MCF 10A (cell line): ENCODE measurements at regions of chr18 and their contacts with region 1.

Region 1: GRCh38 chr18:50819728-50820378 is at the start of gene MRO:
- DNase-seq: peak; percentile 80
- H3K4me3 Mint-ChIP-seq: no peak within 1 kb of the TSS
- H3K27ac Mint-ChIP-seq: no peak within 1 kb of the TSS
- H3K4me1 Mint-ChIP-seq: peaks cover 10% of the 10 kb centered on the region
- H3K27me3 Mint-ChIP-seq: no peaks in the 10 kb centered on the region
- CTCF ChIP-seq: peak; percentile 97
- total RNA-seq, gene MRO: not detected in 2 replicates

Region 2: DNA sequence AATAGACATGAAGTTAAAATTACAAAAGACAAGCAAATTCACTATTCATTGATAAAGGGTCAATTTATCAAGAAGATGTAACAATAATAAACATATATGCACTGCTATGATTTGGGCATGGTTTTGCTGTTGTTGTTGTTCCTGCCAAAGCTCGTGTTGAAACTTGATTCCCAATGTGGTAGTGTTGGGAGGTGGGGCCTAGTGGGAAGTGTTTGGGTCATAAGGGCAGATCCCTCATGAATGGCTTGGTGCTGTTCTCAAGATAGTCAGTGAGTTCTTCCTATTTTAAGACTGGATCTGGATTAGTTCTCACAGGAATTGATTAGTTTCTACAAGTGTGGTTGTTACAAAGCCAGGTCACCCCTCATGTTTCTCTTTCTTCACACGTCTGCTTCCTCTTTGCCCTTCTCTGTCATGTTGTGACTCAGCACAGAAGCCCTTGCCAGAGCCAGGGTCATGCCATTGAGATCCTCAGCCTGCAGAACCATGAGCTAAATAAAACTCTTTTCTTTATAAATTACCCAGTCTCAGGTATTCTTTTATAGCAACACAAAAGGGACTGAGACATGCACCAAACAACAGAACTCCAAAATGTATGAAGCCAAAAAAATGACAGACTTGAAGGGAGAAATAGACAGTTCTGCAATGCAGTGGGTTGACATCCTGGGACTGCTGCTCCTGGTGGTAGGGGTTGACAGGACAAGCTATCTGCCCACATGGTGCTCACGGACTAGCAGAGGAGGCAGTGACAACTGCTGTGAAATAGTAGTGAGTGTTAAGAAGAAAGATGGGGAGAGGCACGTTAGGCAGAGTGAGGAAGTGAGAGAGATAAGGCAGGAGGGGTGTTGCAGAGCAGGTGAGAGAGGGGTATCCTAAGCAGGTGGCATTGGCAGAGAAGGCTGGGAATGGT is 463.6 kb before region 1 on chr18:
- CTCF ChIA-PET with region 1: no interaction called
- POLR2A ChIA-PET with region 1: no interaction called
- intact Hi-C with region 1: no loop called
- DNase-seq: peak; percentile 71
- H3K4me3 Mint-ChIP-seq: no peak overlapping the region
- H3K27ac Mint-ChIP-seq: peak overlapping the region; percentile 78
- H3K4me1 Mint-ChIP-seq: peaks cover 15% of the 10 kb centered on the region
- H3K27me3 Mint-ChIP-seq: peaks cover 28% of the 10 kb centered on the region
- CTCF ChIP-seq: no peak

Region 3: DNA sequence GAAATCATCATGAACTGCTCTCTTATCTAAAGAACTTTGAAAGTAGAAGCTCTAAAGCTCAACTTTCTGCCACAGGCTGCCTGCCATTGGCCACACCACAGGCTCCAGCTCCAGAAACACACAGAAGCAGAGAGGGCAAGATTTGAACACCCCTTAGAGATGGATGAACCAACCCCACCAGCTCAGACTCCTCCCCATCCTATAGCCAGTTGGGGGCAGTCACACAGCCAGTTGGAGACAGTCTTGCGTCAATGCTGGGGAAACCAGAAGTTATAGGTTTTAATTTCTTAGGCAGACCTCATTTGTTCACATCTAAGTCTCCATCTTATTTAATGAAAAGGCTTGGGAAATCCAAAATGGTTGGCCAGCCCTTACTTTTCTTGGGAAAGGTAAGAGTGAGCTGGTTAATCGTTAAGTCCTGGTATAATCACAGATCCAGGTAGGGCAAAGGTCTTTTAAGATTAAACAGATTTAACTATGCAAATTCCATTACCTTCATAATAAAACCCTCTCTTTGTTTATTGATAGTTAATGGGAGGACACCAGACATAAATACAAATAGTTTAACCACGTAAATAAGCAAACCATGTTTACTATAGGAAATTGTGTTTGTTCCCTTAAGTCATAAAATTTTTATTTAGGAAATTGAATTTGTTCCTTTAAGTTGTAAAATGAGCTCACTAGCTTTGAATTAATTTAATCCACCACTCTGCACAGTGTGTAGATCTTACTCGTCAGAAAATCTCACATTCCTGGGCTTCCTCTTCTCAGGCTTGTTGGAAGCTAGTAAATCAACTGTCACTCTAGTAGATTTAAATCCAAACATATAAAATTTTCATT is 28.0 kb before region 1 on chr18:
- CTCF ChIA-PET with region 1: no interaction called
- POLR2A ChIA-PET with region 1: no interaction called
- intact Hi-C with region 1: no loop called
- DNase-seq: no peak
- H3K4me3 Mint-ChIP-seq: no peak overlapping the region
- H3K27ac Mint-ChIP-seq: no peak overlapping the region
- H3K4me1 Mint-ChIP-seq: no peaks in the 10 kb centered on the region
- H3K27me3 Mint-ChIP-seq: peaks cover 32% of the 10 kb centered on the region
- CTCF ChIP-seq: no peak

Region 4: DNA sequence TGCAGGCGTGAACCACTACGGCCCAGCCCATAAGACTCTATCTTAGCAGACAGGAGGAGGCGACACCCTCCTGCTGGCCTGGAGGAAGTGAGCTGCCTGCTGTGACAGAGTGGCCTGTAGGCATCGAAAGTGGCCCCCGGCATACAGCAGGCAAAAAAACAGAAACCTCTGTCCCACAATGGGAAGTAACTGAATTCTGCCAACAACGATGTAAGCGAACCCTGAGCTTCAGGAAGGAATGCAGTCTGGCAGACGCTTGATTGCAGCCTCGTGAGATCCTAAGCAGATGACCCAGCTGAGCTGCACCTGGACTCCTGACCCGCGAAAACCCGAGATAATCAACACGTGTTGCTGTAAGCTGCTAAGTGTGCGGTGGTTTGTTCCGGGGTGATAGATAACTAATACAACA is 13.6 kb before region 1 on chr18:
- CTCF ChIA-PET with region 1: interaction called, 10 read pairs
- POLR2A ChIA-PET with region 1: interaction called, 3 read pairs
- intact Hi-C with region 1: no loop called
- DNase-seq: no peak
- H3K4me3 Mint-ChIP-seq: no peak overlapping the region
- H3K27ac Mint-ChIP-seq: no peak overlapping the region
- H3K4me1 Mint-ChIP-seq: no peaks in the 10 kb centered on the region
- H3K27me3 Mint-ChIP-seq: peaks cover 13% of the 10 kb centered on the region
- CTCF ChIP-seq: no peak

Region 5: DNA sequence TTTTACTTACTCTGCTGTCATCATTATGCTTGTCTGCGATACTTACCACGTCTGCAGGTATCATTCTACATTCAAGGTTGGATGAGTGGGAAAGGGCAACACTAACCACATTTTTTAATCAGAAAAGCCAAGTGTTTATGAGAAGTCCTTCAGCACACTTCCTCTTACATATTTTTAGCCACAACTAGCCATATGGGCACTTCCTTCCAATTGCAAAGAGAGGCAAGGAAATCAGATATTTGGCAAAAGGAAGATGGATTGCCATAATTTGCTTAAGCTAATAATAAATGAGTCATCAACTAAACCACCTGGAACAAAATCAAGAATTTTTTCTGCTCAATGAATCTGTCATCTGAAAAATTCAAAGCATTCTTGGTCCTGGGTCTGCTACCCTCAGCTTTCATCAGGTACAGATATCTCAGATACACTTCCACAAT is 16.7 kb after region 1 on chr18:
- CTCF ChIA-PET with region 1: interaction called, 28 read pairs
- POLR2A ChIA-PET with region 1: no interaction called
- intact Hi-C with region 1: no loop called
- DNase-seq: peak; percentile 78
- H3K4me3 Mint-ChIP-seq: no peak overlapping the region
- H3K27ac Mint-ChIP-seq: no peak overlapping the region
- H3K4me1 Mint-ChIP-seq: peaks cover 17% of the 10 kb centered on the region
- H3K27me3 Mint-ChIP-seq: no peaks in the 10 kb centered on the region
- CTCF ChIP-seq: no peak

Region 6: GRCh38 chr18:50866765-50867164 is 46.9 kb after region 1 on chr18:
- CTCF ChIA-PET with region 1: interaction called, 6 read pairs
- POLR2A ChIA-PET with region 1: interaction called, 7 read pairs
- intact Hi-C with region 1: loop called (anchors 1 kb)
- DNase-seq: peak; percentile 22
- H3K4me3 Mint-ChIP-seq: no peak overlapping the region
- H3K27ac Mint-ChIP-seq: no peak overlapping the region
- H3K4me1 Mint-ChIP-seq: peaks cover 12% of the 10 kb centered on the region
- H3K27me3 Mint-ChIP-seq: no peaks in the 10 kb centered on the region
- CTCF ChIP-seq: peak; percentile 7

Region 7: DNA sequence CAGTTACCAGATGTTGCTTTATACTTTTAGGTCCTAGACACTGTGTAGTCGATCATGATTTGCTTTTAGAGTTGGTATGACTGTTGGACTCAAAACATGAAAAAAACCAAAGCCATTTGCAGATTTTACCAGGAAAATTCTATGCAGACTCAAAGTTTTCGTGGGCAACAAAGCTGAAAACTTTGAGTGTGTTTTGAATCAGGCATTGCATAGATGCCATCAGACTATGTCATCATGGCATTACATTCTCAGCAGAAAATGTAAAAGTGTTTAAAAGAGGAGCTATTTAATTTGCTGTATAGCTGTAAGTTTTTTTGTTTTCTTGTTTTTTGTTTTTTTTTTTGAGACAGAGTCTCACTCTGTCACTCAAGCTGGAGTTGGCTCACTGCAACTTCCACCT is 104.5 kb after region 1 on chr18:
- CTCF ChIA-PET with region 1: no interaction called
- POLR2A ChIA-PET with region 1: no interaction called
- intact Hi-C with region 1: no loop called
- DNase-seq: no peak
- H3K4me3 Mint-ChIP-seq: no peak overlapping the region
- H3K27ac Mint-ChIP-seq: no peak overlapping the region
- H3K4me1 Mint-ChIP-seq: no peaks in the 10 kb centered on the region
- H3K27me3 Mint-ChIP-seq: no peaks in the 10 kb centered on the region
- CTCF ChIP-seq: no peak

Region 8: DNA sequence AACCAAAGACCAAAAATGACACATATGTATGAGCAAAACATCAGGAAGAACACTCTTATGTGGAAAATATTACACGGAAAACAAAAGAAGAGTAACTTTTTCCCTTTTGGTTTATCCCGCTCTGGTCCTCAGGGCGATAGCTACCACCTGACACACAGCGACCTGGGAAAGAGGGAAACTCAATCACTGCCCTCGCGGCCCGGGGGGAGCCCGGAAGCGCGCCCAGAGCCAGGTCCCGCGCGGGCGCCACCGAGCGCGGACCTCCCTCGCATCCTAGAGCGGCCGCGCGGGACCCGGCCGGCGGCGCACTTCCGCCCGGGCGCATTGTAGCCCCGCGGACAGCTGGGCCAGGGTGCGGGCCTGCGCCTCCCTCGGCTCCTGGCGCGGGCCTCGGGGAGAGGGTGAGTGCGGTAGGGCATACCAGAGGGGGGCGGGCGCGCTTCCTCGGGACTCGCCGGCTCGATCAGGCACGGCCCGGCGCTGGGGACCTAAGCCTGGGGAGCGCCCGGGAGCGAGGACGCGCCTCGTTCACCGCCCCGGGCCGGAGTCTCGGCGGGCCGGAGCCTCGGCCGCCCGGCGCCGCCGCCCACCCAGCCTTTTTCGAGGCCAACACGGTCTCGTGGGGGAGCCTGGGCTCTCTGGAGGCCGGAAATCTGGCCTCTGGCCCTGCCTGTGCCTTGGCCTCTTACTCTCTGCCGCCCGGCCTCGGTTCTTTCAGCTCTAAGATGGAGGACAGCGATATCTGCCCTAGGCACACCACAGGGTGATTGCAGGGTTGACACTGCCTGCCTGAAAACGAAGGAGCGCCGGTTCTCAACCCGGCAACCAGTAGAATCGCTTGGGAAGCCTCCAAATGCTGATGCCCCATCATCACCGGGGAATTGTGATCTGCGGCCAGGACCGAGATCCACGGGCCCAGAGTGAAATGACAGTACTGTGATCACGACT is 148.1 kb after region 1 on chr18 and contains the start of gene ELAC1:
- CTCF ChIA-PET with region 1: interaction called, 3 read pairs
- POLR2A ChIA-PET with region 1: interaction called, 7 read pairs
- intact Hi-C with region 1: loop called (anchors 1 kb)
- DNase-seq: peak; percentile 72
- H3K4me3 Mint-ChIP-seq: peak within 1 kb of the TSS; percentile 68
- H3K27ac Mint-ChIP-seq: peak within 1 kb of the TSS; percentile 75
- H3K4me1 Mint-ChIP-seq: peaks cover 27% of the 10 kb centered on the region
- H3K27me3 Mint-ChIP-seq: no peaks in the 10 kb centered on the region
- CTCF ChIP-seq: no peak
- total RNA-seq, gene ELAC1: 10.8 and 14.0 TPM in 2 replicates

Region 9: DNA sequence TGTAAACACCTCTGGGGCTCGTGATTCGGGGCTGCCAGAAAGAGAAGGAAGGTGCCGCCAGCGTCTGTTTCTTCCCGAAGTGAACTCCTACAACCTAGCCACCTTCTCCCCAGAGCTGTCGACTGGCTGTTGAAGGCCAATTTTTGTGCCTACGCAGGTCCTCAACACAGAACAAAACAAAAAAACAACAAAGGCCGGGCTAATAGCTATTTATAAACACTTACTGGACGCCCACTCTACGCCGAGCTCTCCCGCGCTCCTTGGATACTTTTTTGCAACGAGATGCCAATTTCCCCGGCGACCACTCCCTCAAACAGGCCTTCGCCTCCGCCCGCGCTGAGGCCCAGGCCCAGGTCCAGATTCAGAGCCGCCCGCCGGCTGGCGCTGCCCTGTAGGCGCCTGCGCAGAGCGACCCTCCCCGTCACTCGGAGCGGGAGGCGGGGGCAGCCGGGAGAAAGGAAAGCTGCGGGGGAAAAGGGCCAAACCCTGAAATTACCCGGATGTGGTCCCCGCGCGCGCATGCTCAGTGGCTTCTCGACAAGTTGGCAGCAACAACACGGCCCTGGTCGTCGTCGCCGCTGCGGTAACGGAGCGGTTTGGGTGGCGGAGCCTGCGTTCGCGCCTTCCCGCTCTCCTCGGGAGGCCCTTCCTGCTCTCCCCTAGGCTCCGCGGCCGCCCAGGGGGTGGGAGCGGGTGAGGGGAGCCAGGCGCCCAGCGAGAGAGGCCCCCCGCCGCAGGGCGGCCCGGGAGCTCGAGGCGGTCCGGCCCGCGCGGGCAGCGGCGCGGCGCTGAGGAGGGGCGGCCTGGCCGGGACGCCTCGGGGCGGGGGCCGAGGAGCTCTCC is 210.1 kb after region 1 on chr18 and contains the start of gene SMAD4:
- CTCF ChIA-PET with region 1: interaction called, 13 read pairs
- POLR2A ChIA-PET with region 1: interaction called, 3 read pairs
- intact Hi-C with region 1: loop called (anchors 5 kb)
- DNase-seq: peak; percentile 96
- H3K4me3 Mint-ChIP-seq: peak within 1 kb of the TSS; percentile 96
- H3K27ac Mint-ChIP-seq: peak within 1 kb of the TSS; percentile 100
- H3K4me1 Mint-ChIP-seq: peaks cover 22% of the 10 kb centered on the region
- H3K27me3 Mint-ChIP-seq: no peaks in the 10 kb centered on the region
- CTCF ChIP-seq: no peak
- total RNA-seq, gene SMAD4: 75.8 and 84.4 TPM in 2 replicates

Region 10: GRCh38 chr18:51051105-51051712 is 231.4 kb after region 1 on chr18:
- CTCF ChIA-PET with region 1: interaction called, 38 read pairs
- POLR2A ChIA-PET with region 1: interaction called, 4 read pairs
- intact Hi-C with region 1: loop called (anchors 1 kb)
- DNase-seq: peak; percentile 57
- H3K4me3 Mint-ChIP-seq: no peak overlapping the region
- H3K27ac Mint-ChIP-seq: no peak overlapping the region
- H3K4me1 Mint-ChIP-seq: peaks cover 4% of the 10 kb centered on the region
- H3K27me3 Mint-ChIP-seq: no peaks in the 10 kb centered on the region
- CTCF ChIP-seq: peak; percentile 72